A673 (cell line): ENCODE measurements at regions of chr7 and their contacts with region 1.

Region 1: GRCh38 chr7:91784463-91784862 is 96.0 kb downstream of the MTERF1 start:
- DNase-seq: peak; percentile 82
- H3K4me3 ChIP-seq: no peak overlapping the region
- H3K27ac ChIP-seq: no peak overlapping the region
- H3K4me1 ChIP-seq: peaks cover 49% of the 10 kb centered on the region
- H3K27me3 ChIP-seq: no peaks in the 10 kb centered on the region
- CTCF ChIP-seq: peak; percentile 63

Region 2: GRCh38 chr7:91082852-91083495 is 701.5 kb before region 1 on chr7:
- CTCF ChIA-PET with region 1: no interaction called
- POLR2A ChIA-PET with region 1: no interaction called
- intact Hi-C with region 1: loop called (anchors 1 kb)
- DNase-seq: peak; percentile 62
- H3K4me3 ChIP-seq: no peak overlapping the region
- H3K27ac ChIP-seq: peak overlapping the region; percentile 69
- H3K4me1 ChIP-seq: peaks cover 91% of the 10 kb centered on the region
- H3K27me3 ChIP-seq: no peaks in the 10 kb centered on the region
- CTCF ChIP-seq: peak; percentile 76

Region 3: GRCh38 chr7:91264046-91264923 is 520.2 kb before region 1 on chr7 and contains the start of gene FZD1:
- CTCF ChIA-PET with region 1: no interaction called
- POLR2A ChIA-PET with region 1: no interaction called
- intact Hi-C with region 1: loop called (anchors 5 kb)
- DNase-seq: peak; percentile 100
- H3K4me3 ChIP-seq: peak within 1 kb of the TSS; percentile 92
- H3K27ac ChIP-seq: peak within 1 kb of the TSS; percentile 97
- H3K4me1 ChIP-seq: peaks cover 21% of the 10 kb centered on the region
- H3K27me3 ChIP-seq: no peaks in the 10 kb centered on the region
- CTCF ChIP-seq: no peak
- total RNA-seq, gene FZD1: 47.6 and 49.9 TPM in 2 replicates

Region 4: DNA sequence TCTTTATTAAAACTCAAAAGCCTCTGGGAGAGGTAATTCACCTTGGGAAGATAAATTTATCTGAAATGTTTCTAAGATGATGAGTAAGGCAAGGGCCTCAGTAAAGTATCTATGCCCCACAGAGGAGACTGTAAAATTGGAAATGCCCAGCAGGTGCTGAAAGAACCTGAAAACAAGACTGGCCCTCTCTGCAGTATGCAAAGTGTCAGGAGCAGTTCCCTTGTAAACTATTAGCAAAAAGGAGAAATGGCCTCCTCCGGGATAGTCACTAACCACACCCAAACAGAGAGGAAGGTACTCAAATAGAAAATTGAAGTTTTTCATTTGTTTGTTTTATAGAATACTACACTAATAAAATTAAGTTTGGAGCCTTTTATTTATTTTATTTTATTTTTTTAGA is 439.0 kb before region 1 on chr7:
- CTCF ChIA-PET with region 1: no interaction called
- POLR2A ChIA-PET with region 1: no interaction called
- intact Hi-C with region 1: loop called (anchors 5 kb)
- DNase-seq: no peak
- H3K4me3 ChIP-seq: no peak overlapping the region
- H3K27ac ChIP-seq: no peak overlapping the region
- H3K4me1 ChIP-seq: peaks cover 57% of the 10 kb centered on the region
- H3K27me3 ChIP-seq: no peaks in the 10 kb centered on the region
- CTCF ChIP-seq: no peak

Region 5: GRCh38 chr7:91636129-91636724 is 148.2 kb before region 1 on chr7:
- CTCF ChIA-PET with region 1: no interaction called
- POLR2A ChIA-PET with region 1: no interaction called
- intact Hi-C with region 1: loop called (anchors 5 kb)
- DNase-seq: peak; percentile 67
- H3K4me3 ChIP-seq: no peak overlapping the region
- H3K27ac ChIP-seq: no peak overlapping the region
- H3K4me1 ChIP-seq: peaks cover 29% of the 10 kb centered on the region
- H3K27me3 ChIP-seq: no peaks in the 10 kb centered on the region
- CTCF ChIP-seq: peak; percentile 82

Region 6: GRCh38 chr7:91869661-91870060 is 85.2 kb after region 1 on chr7:
- CTCF ChIA-PET with region 1: no interaction called
- POLR2A ChIA-PET with region 1: no interaction called
- intact Hi-C with region 1: loop called (anchors 5 kb)
- DNase-seq: peak; percentile 39
- H3K4me3 ChIP-seq: no peak overlapping the region
- H3K27ac ChIP-seq: peak overlapping the region; percentile 99
- H3K4me1 ChIP-seq: peaks cover 72% of the 10 kb centered on the region
- H3K27me3 ChIP-seq: no peaks in the 10 kb centered on the region
- CTCF ChIP-seq: peak; percentile 44